AG04449 (cell line): ENCODE measurements at regions of chr10 and their contacts with region 1.

Region 1: DNA sequence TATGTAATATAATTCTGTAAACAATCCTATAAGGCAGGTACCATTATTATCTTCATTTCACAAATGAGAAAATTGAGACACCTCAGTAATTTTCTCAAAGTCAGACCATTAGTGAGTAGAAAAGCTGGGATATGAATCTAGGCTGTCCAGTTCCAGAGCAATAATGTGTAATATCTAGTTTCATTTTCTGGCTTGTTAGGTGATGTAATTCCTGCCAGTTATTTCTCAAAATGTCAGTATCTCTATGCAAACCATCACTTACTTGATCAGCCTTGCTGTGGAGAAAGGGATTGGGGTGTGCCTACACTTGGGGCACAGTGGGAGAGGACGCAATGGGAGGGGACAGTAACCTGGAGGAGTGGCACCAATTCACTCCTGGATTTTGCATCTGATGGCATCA is 157.5 kb downstream of the LYZL1 start:
- DNase-seq: no peak
- H3K4me3 ChIP-seq: no peak overlapping the region
- CTCF ChIP-seq: no peak

Region 2: DNA sequence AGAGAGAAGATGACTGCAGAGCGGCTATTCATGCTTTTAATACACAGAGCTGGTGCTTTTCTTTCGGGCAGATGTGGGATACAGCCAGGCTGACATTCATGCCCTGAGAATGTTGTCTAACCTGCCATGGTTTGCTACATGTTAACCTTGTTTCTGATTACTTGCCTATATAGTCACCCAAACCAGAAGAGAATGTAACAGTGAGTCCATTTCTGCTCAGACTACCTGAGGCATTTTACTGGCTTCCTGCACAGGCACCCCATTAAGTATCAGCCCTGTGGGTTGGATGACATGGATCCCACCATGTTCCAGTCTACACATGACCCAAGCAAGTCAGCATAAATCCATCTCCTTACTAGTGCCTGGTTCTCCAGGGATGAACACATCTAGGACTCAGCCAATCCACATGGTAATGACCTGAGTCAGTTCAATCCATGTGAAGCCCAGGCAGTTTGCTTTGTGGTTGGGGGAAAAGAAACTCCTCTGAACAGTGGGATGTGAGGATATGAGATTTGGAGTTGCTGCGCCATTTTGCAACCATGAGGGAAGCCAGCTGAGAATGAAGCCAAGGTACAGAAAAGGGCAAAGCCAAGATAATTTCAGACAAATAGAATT is 1645.0 kb before region 1 on chr10:
- CTCF ChIA-PET with region 1: no interaction called
- POLR2A ChIA-PET with region 1: no interaction called
- DNase-seq: no peak
- H3K4me3 ChIP-seq: no peak overlapping the region
- CTCF ChIP-seq: no peak

Region 3: GRCh38 chr10:29223326-29223725 is 223.0 kb before region 1 on chr10:
- CTCF ChIA-PET with region 1: no interaction called
- POLR2A ChIA-PET with region 1: no interaction called
- DNase-seq: no peak
- H3K4me3 ChIP-seq: no peak overlapping the region
- CTCF ChIP-seq: no peak

Region 4: DNA sequence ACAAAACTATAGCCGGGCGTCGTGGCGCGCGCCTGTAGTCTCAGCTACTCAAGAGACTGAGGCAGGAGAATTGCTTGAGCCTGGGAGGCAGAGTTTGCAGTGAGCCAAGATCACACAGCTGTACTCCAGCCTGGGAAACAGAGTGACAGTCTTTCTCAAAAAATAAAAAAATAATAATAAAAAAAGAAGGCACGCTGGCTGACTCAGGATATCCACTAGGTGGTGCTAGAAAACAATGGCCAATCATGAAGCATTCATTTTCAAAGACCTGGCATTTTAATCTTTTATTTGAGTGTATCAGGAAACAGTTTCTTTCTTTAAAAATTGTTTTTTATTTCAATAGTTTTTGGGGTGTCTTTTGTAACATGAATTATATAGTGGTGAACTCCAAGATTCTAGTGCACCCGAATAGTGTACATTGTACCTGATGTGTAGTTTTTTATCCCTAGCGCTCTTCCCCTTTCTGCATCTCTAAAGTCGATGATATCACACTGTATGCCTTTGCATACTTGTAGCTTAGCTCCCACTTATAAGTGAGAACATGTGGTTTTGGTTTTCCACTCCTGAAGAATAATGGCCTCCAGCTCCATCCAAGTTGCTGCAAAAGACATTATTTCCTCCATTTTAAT is 68.9 kb before region 1 on chr10:
- CTCF ChIA-PET with region 1: interaction called, 72 read pairs
- POLR2A ChIA-PET with region 1: no interaction called
- DNase-seq: no peak
- H3K4me3 ChIP-seq: no peak overlapping the region
- CTCF ChIP-seq: peak; percentile 43

Region 5: DNA sequence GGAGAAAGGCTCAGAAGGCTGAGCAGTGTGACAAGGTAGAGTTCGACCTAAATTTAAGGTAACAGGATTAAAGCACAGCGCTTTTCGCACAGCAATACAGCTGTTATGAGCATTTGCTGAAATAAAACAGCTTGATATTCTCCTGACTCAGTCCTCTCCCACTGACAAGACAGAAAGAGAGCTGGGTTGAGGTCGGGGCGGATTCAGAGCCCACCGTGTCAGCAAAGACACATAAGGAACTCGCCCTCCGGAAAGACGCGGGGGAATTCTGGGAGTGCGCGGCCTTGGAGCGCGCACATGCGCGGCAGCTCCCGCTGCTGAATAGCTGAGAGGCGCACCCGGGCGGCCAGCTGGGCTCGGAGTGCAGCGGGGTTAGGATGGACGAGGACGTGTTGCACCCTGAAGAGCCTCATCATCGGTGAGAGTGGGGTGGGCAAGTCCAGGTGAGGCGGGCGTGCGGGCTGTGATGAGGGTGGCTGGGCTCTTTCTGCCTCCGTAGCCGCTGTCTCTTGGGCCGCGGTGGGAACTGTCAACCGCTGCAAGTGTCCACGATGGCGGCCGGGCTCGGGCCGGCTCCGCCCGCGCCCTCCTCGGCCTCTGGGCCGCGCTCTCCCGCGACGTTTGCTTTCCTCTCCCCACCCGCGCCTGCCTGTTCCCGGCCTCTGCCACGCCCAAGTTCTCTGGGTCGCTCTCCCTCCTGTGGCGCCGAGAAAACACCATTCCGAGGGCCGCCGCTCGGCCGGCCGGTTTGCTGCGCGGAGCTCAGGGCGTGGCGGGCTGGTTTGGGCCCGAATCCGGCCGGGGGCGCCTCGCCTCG is 36.9 kb before region 1 on chr10:
- CTCF ChIA-PET with region 1: interaction called, 10 read pairs
- POLR2A ChIA-PET with region 1: no interaction called
- DNase-seq: no peak
- H3K4me3 ChIP-seq: peak overlapping the region; percentile 97
- CTCF ChIP-seq: no peak

Region 6: GRCh38 chr10:29430101-29430500 is 16.2 kb before region 1 on chr10:
- CTCF ChIA-PET with region 1: interaction called, 56 read pairs
- POLR2A ChIA-PET with region 1: no interaction called
- DNase-seq: no peak
- H3K4me3 ChIP-seq: no peak overlapping the region
- CTCF ChIP-seq: no peak

Region 7: GRCh38 chr10:29470355-29470705 is 24.0 kb after region 1 on chr10:
- CTCF ChIA-PET with region 1: interaction called, 11 read pairs
- POLR2A ChIA-PET with region 1: no interaction called
- DNase-seq: no peak
- H3K4me3 ChIP-seq: no peak overlapping the region
- CTCF ChIP-seq: peak; percentile 40